ENCODE measurements at regions of chr14 and their contacts with region 1.

Region 1: GRCh38 chr14:52473557-52473956 is 78.7 kb downstream of the TXNDC16 start:
- DNase-seq: no peak
- H3K4me3 ChIP-seq: no peak overlapping the region
- H3K27ac ChIP-seq: no peak overlapping the region
- H3K4me1 ChIP-seq: no peaks in the 10 kb centered on the region
- H3K27me3 ChIP-seq: no peaks in the 10 kb centered on the region
- CTCF ChIP-seq: peak; percentile 32 to 37 (median 34)
- EP300 ChIP-seq: no peak
- POLR2A ChIP-seq: no peak

Region 2: GRCh38 chr14:52299692-52300278 is 173.8 kb before region 1 on chr14:
- intact Hi-C with region 1: loop called (anchors 5 kb)
- DNase-seq: no peak
- H3K4me3 ChIP-seq: no peak overlapping the region
- H3K27ac ChIP-seq: no peak overlapping the region
- H3K4me1 ChIP-seq: no peaks in the 10 kb centered on the region
- H3K27me3 ChIP-seq: no peaks in the 10 kb centered on the region
- CTCF ChIP-seq: peak; percentile 65 to 75 (median 66)
- EP300 ChIP-seq: no peak
- POLR2A ChIP-seq: no peak

Measured in esophagus muscularis mucosa (tissue), 4 donors.